ENCODE measurements at regions of chr6 and their contacts with region 1.

Region 1: GRCh38 chr6:24766680-24767462 is 7.9 kb upstream of the GMNN start:
- DNase-seq: no peak
- H3K4me3 ChIP-seq: no peak overlapping the region
- H3K27ac ChIP-seq: no peak overlapping the region
- H3K4me1 ChIP-seq: no peaks in the 10 kb centered on the region
- H3K27me3 ChIP-seq: no peaks in the 10 kb centered on the region
- CTCF ChIP-seq: peak in 3 of 4 experiments; percentile 11 to 29 (median 27)
- POLR2A ChIP-seq: no peak

Region 2: DNA sequence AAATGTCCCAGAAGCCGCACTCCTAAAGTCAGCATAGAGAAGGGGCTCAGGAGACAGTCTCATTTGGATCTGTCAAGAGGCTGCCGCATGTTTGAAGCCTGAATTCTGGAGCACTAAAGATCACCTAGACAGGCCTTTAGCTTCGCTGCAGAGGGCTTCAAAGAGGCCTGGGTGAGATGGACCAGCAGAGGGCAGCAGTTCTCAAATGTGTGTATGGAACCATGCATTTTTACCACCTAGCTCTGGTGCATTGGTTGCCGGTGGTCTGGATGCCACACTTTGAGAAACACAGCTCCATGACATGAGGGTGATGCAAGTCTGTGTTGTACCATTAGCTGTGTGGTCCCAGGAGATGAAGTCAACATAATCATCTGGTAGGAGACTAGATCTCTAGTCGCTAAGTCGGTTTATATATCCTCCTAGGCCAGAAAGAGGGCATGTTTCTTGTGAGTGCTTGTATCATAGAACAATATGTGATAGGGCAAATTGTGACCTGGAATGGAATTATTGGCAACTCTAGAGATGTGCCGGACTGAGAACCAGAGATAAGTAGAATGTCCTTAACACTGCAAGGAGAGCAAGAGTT is 185.7 kb before region 1 on chr6:
- intact Hi-C with region 1: loop called (anchors 10 kb)
- DNase-seq: peak; percentile 56 to 72
- H3K4me3 ChIP-seq: no peak overlapping the region
- H3K27ac ChIP-seq: no peak overlapping the region
- H3K4me1 ChIP-seq: no peaks in the 10 kb centered on the region
- H3K27me3 ChIP-seq: no peaks in the 10 kb centered on the region
- CTCF ChIP-seq: peak; percentile 58 to 74 (median 62)
- POLR2A ChIP-seq: no peak

Measured in uterus (tissue), 4 donors.